Left lung (tissue), 14 donors: ENCODE measurements at regions of chr10 and their contacts with region 1.

Region 1: DNA sequence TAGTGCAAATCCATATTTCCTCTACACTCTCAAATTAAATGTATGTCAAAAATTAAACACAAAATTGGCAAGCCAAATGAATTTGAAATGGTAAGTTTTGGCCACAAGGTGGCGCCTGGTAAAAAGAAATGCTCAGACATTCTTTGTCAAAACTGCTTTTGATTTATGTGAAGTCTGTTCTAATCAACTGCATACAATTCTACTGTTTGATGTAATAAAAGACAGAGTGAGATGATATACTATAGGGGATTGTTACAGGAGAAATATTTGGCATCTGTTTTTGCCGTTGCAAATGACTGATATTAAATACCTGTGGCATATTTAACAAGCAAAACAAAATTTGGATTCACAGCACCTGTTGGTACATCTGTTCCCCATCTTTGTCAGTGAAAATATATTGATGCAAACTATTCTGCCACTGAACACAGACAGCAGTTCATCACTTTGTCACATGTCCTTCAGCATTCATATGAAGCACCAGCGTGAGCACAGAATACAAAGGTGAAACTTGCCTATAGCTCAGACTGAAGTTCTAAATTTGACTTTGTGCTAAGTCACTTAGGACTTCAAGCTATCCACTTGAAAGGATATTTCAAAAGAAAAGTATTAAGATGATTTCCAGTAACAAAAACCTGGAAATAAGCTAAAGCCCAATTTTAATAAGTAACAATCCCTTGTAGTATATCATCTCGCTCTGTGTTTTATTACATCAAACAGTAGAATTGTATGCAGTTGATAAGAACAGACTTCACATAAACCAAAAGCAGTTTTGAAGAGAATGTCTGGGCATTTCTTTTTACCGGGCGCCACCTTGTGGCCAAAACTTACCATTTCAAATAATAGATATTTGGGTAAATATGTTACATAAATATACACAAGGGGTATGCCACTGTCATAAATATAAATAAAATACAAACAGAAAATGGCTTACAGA is 10.2 kb upstream of the CH25H start:
- DNase-seq: peak in 2 of 4 donors; percentile 59 to 72
- ATAC-seq: peak; percentile 67
- H3K4me3 ChIP-seq: no peak overlapping the region
- H3K27ac ChIP-seq: peak overlapping the region in 1 of 2 donors; percentile 27
- H3K4me1 ChIP-seq: peaks cover 5 to 12% of the 10 kb centered on the region in 2 donors
- H3K27me3 ChIP-seq: no peaks in the 10 kb centered on the region
- CTCF ChIP-seq: peak; percentile 68 to 86

Region 2: DNA sequence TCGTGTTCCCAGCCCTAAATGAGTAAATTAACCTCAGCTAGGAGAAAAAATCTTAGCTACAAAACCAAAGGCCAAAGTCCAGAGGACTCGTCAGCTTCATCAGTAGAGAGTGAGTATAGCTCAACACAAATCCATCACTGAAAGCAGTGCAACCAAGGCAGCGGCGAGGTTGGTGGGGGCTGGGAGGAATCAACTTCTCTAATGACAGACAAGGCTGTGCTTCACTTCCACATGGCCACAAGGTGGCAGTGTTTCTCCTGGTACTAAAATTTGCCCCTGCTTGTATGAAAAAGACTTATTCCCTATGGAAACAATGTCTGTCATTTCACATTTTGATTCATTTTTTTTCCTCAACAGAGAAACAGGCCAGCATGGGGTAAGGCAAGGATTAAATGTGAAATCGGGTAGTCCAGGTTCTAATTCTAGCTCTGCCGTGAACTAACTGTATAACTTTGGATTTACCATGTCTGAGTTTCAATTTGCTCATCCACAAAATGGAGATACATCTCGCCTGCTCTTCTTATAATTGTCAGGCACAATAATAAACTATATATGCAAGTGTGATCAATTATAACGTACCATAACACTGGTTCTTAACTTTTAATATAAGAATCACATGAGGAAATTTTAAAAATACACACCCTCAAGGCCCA is 187.4 kb before region 1 on chr10:
- intact Hi-C with region 1: loop called in 1 of 2 experiments (anchors 2 kb)
- DNase-seq: peak; percentile 78 to 88 (median 85)
- ATAC-seq: peak; percentile 78
- H3K4me3 ChIP-seq: no peak overlapping the region
- H3K27ac ChIP-seq: peak overlapping the region in 1 of 2 donors; percentile 73
- H3K4me1 ChIP-seq: peaks cover 23 to 41% of the 10 kb centered on the region in 2 donors
- H3K27me3 ChIP-seq: no peaks in the 10 kb centered on the region
- CTCF ChIP-seq: peak; percentile 90 to 92

Region 3: GRCh38 chr10:89100680-89101079 is 116.6 kb before region 1 on chr10:
- intact Hi-C with region 1: no loop called
- DNase-seq: no peak
- ATAC-seq: peak; percentile 30
- H3K4me3 ChIP-seq: no peak overlapping the region
- H3K27ac ChIP-seq: no peak overlapping the region
- H3K4me1 ChIP-seq: no peaks in the 10 kb centered on the region
- H3K27me3 ChIP-seq: no peaks in the 10 kb centered on the region
- CTCF ChIP-seq: no peak

Region 4: GRCh38 chr10:89327784-89328441 is 110.6 kb after region 1 on chr10 and contains the start of gene IFIT3:
- intact Hi-C with region 1: no loop called
- DNase-seq: peak in 3 of 4 donors; percentile 67 to 92 (median 84)
- ATAC-seq: peak; percentile 86
- H3K4me3 ChIP-seq: peak within 1 kb of the TSS; percentile 33 to 53
- H3K27ac ChIP-seq: peak within 1 kb of the TSS; percentile 92 to 95
- H3K4me1 ChIP-seq: peaks cover 14 to 58% of the 10 kb centered on the region in 2 donors
- H3K27me3 ChIP-seq: no peaks in the 10 kb centered on the region
- CTCF ChIP-seq: no peak
- polyA plus RNA-seq, gene IFIT3: 12.4 to 16.9 (median 13.5) TPM